ENCODE measurements at regions of chr18 and their contacts with region 1.

Region 1: DNA sequence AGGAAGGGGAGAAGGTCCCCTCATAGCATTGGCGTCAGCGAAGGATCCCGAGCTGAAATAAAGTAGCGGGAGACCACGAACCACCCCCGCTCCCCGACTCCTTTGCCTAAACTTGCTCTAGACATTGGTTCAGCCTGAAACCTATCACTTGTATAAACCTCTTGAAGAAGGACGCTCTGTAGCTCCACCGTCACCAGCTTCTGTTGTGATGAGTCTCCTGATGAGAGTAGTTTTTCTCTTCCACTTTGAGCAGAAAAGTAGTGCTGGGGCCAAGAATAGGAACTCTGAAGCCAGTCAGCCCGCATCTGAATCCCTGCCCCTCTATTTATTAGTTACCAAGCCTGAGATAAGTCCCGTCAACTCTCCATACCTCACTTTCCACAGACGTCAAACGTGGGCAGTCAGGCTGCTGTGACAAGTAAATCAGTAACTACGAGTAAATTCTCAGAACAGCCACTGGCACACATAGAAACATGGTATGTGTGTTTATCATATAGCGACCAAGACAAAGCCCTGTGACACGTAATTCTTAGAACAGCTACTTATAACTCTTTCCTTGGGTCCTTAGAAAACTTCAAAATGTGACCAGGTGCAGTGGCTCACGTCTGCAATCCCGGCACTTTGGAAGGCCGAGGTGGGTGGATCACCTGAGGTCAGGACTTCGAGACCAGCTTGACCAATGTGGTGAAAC is 61.7 kb downstream of the CD226 start:
- DNase-seq: peak; percentile 36
- H3K4me3 Mint-ChIP-seq: peak overlapping the region; percentile 76
- H3K27ac Mint-ChIP-seq: peak overlapping the region; percentile 100
- H3K4me1 Mint-ChIP-seq: peaks cover 75% of the 10 kb centered on the region
- H3K27me3 Mint-ChIP-seq: no peaks in the 10 kb centered on the region

Region 2: DNA sequence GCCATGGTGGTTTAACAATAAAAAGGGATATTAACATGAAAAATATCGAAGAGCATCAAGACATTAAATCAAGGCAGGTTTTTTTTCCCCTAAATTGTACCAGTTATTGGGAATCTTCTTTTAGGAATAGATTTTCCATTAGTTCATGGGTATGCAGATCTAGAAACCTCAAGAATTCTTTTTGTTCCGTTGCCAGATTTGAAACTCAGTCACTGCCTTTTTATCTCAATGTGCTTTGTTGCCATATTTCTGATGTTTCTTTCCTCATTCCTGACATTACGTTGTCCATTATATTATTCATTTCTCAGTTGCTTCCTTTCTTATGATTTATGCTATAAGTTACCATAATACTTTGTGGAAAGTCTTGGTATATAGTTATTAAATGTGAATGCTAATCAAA is 100.5 kb before region 1 on chr18:
- intact Hi-C with region 1: no loop called
- DNase-seq: no peak
- H3K4me3 Mint-ChIP-seq: no peak overlapping the region
- H3K27ac Mint-ChIP-seq: no peak overlapping the region
- H3K4me1 Mint-ChIP-seq: peaks cover 1% of the 10 kb centered on the region
- H3K27me3 Mint-ChIP-seq: no peaks in the 10 kb centered on the region

Region 3: GRCh38 chr18:69865776-69866175 is 20.2 kb before region 1 on chr18:
- intact Hi-C with region 1: loop called (anchors 2 kb)
- DNase-seq: no peak
- H3K4me3 Mint-ChIP-seq: no peak overlapping the region
- H3K27ac Mint-ChIP-seq: no peak overlapping the region
- H3K4me1 Mint-ChIP-seq: peaks cover 9% of the 10 kb centered on the region
- H3K27me3 Mint-ChIP-seq: no peaks in the 10 kb centered on the region

Region 4: GRCh38 chr18:69948919-69949537 is 63.0 kb after region 1 on chr18:
- intact Hi-C with region 1: loop called (anchors 1 kb)
- DNase-seq: no peak
- H3K4me3 Mint-ChIP-seq: no peak overlapping the region
- H3K27ac Mint-ChIP-seq: no peak overlapping the region
- H3K4me1 Mint-ChIP-seq: peaks cover 54% of the 10 kb centered on the region
- H3K27me3 Mint-ChIP-seq: no peaks in the 10 kb centered on the region